ENCODE measurements at regions of chr17 and their contacts with region 1.

Region 1: DNA sequence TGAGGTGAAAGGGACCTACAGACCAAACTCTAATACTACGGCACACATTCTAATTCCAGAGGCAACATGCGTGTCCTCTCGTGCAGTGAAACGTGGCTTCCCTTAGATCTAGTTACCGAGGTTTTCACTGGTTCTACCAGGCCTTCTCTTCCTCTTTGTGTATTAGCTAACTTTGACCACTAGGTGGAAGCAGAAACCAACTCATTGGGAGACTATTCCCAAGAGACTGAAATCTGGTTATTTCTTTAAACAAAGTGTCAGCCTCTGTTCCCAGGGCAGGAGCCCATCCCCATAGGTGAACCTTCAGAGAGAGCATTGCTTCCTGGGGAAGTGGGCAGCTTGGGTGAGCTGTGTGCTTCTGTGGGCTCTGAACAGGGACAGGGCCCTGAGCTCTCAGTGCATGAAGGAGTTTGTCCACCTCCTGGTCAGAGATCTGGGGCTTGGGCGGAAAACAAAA is 19.7 kb upstream of the RCVRN start:
- DNase-seq: peak; percentile 21
- H3K4me3 ChIP-seq: no peak overlapping the region
- H3K27ac ChIP-seq: peak overlapping the region; percentile 21
- H3K27me3 ChIP-seq: no peaks in the 10 kb centered on the region
- CTCF ChIP-seq: peak; percentile 85

Region 2: GRCh38 chr17:9948928-9949327 is 24.2 kb after region 1 on chr17:
- CTCF ChIA-PET with region 1: no interaction called
- POLR2A ChIA-PET with region 1: no interaction called
- DNase-seq: no peak
- H3K4me3 ChIP-seq: no peak overlapping the region
- H3K27ac ChIP-seq: no peak overlapping the region
- H3K27me3 ChIP-seq: no peaks in the 10 kb centered on the region
- CTCF ChIP-seq: no peak

Region 3: GRCh38 chr17:10226930-10227685 is 302.3 kb after region 1 on chr17:
- CTCF ChIA-PET with region 1: interaction called, 13 read pairs
- POLR2A ChIA-PET with region 1: no interaction called
- DNase-seq: no peak
- H3K4me3 ChIP-seq: no peak overlapping the region
- H3K27ac ChIP-seq: no peak overlapping the region
- H3K27me3 ChIP-seq: no peaks in the 10 kb centered on the region
- CTCF ChIP-seq: peak; percentile 77

Measured in AG04450 (cell line).